CD4-positive, alpha-beta T cell (primary cell): ENCODE measurements at regions of chr5 and their contacts with region 1.

Region 1: DNA sequence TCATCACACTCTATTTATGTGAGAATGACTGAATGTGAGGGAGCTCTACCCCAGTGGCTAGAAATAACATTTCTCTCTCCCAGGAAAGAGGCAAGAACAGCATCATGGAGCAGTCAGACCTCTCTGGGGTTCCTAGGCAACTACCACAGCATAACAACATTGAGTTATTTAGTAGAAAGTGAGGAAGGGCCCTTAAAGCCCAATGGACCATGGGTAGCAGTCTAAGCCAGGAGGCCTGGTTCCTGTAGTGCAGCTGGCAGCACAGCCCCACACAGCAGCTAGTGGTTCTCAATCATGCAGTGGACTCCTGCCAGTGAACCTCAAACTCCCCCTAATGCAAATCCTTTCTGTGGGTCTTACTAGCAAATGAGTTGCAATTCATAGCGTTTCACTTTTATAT is 55.3 kb downstream of the SPEF2 start:
- DNase-seq: peak in 12 of 14 experiments; percentile 3 to 70 (median 23)
- ATAC-seq: peak; percentile 74
- H3K4me3 ChIP-seq: no peak overlapping the region
- H3K4me3 Mint-ChIP-seq: peak overlapping the region; percentile 63
- H3K27ac ChIP-seq: peak overlapping the region in 1 of 2 donors; percentile 25
- H3K27ac Mint-ChIP-seq: peak overlapping the region; percentile 93
- H3K4me1 ChIP-seq: peaks cover 10% of the 10 kb centered on the region
- H3K4me1 Mint-ChIP-seq: peaks cover 78% of the 10 kb centered on the region
- H3K27me3 ChIP-seq: no peaks in the 10 kb centered on the region
- H3K27me3 Mint-ChIP-seq: no peaks in the 10 kb centered on the region
- CTCF ChIP-seq: no peak

Region 2: DNA sequence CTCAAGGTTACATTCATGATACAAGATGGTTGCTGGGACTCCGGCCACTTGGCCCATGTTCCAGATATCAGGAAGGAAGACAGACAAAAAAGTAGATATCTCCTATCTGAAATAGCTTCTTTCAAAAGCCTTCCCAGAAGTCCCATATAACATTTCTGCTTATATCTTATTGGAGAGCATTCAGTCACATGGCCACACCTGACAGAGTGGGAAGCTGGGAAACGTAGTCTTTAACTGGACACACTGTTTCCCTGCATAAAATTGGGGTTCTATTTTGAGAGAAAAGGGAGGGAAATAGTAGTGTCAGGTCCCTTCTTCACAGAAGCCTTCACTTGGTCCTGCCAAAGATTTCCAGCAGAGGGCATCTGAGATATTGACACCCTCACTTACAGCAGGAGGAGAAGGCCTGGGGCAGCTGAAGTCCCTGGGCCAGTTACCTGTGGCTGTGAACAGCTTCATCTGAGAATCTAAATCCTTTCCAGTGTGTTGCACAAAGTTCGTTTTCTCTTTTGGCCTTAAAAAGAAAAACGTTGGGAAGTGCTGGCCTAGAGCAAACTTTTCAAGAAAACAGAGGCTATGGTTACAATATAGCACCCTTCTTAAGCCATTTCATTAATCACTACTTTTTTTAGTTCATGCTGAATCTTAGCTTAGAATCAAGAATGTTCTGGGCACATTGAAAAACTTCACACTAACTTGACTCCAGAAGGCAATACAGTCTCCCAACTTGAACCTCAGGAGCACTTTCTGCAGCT is 21.8 kb before region 1 on chr5:
- CTCF ChIA-PET with region 1: interaction called, 10 read pairs
- POLR2A ChIA-PET with region 1: interaction called, 6 read pairs
- intact Hi-C with region 1: no loop called
- DNase-seq: peak; percentile 37 to 84 (median 58)
- ATAC-seq: peak; percentile 99
- H3K4me3 ChIP-seq: no peak overlapping the region
- H3K4me3 Mint-ChIP-seq: no peak overlapping the region
- H3K27ac ChIP-seq: no peak overlapping the region
- H3K27ac Mint-ChIP-seq: peak overlapping the region; percentile 23
- H3K4me1 ChIP-seq: peaks cover 5% of the 10 kb centered on the region
- H3K4me1 Mint-ChIP-seq: peaks cover 16% of the 10 kb centered on the region
- H3K27me3 ChIP-seq: no peaks in the 10 kb centered on the region
- H3K27me3 Mint-ChIP-seq: no peaks in the 10 kb centered on the region
- CTCF ChIP-seq: peak; percentile 84

Region 3: GRCh38 chr5:35656721-35657120 is 16.3 kb before region 1 on chr5:
- CTCF ChIA-PET with region 1: interaction called, 10 read pairs
- POLR2A ChIA-PET with region 1: interaction called, 9 read pairs
- intact Hi-C with region 1: loop called in 1 of 2 experiments (anchors 2 kb)
- DNase-seq: no peak
- ATAC-seq: no peak
- H3K4me3 ChIP-seq: no peak overlapping the region
- H3K4me3 Mint-ChIP-seq: no peak overlapping the region
- H3K27ac ChIP-seq: no peak overlapping the region
- H3K27ac Mint-ChIP-seq: no peak overlapping the region
- H3K4me1 ChIP-seq: no peaks in the 10 kb centered on the region
- H3K4me1 Mint-ChIP-seq: peaks cover 31% of the 10 kb centered on the region
- H3K27me3 ChIP-seq: no peaks in the 10 kb centered on the region
- H3K27me3 Mint-ChIP-seq: no peaks in the 10 kb centered on the region
- CTCF ChIP-seq: no peak

Region 4: GRCh38 chr5:35815089-35815936 is 142.3 kb after region 1 on chr5:
- CTCF ChIA-PET with region 1: no interaction called
- POLR2A ChIA-PET with region 1: interaction called, 4 read pairs
- intact Hi-C with region 1: loop called in 1 of 2 experiments (anchors 5 kb)
- DNase-seq: peak in 4 of 14 experiments; percentile 47 to 75 (median 69)
- ATAC-seq: peak; percentile 27
- H3K4me3 ChIP-seq: no peak overlapping the region
- H3K4me3 Mint-ChIP-seq: no peak overlapping the region
- H3K27ac ChIP-seq: peak overlapping the region; percentile 8 to 59
- H3K27ac Mint-ChIP-seq: no peak overlapping the region
- H3K4me1 ChIP-seq: peaks cover 65% of the 10 kb centered on the region
- H3K4me1 Mint-ChIP-seq: peaks cover 39% of the 10 kb centered on the region
- H3K27me3 ChIP-seq: no peaks in the 10 kb centered on the region
- H3K27me3 Mint-ChIP-seq: no peaks in the 10 kb centered on the region
- CTCF ChIP-seq: peak; percentile 64